Naive thymus-derived CD4-positive, alpha-beta T cell (primary cell): ENCODE measurements at regions of chr15 and their contacts with region 1.

Region 1: DNA sequence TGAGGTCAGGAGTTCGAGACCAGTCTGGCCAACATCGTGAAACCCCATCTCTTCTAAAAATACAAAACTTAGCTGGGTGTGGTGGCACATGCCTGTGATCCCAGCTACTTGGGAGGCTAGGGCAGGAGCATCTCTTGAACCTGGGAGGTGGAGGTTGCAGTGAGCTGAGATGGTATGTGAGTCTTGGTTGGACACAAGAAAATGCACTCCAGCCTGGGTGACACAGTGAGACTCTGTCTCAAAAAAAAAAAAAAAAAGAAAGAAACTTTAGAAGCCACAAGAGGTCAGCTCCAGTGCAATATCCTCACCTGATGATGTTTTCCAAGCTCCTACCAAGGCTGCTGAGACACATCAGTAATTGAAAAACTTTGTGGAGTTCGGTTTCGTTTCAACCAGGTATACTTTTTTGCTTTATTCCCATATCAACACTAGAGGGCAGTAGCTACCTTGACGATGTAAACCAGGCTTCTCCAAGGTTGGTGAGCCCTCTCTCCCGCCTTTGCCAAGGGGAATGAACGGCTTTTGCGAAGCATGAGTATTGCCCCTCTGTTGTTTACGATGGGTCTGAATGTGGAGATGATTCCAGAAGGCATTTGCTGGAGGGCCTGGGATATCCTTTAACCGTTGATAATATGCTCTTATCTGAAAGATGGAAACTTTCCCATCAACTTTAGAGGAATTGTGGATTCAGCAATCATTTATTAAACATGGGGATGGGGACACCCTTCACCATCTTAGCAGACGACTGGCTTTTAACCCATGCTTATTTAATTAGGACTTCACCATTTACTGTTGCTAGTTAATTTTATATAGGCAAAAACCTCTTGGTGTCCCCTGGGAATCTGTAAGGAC is 202.8 kb downstream of the SV2B start:
- DNase-seq: peak in 6 of 9 donors; percentile 32 to 64 (median 55)
- ATAC-seq: peak; percentile 79
- H3K4me3 ChIP-seq: no peak overlapping the region
- H3K4me3 Mint-ChIP-seq: peak overlapping the region in 7 of 10 donors; percentile 20 to 61 (median 57)
- H3K27ac ChIP-seq: no peak overlapping the region
- H3K27ac Mint-ChIP-seq: peak overlapping the region in 3 of 9 donors; percentile 15 to 63 (median 34)
- H3K4me1 ChIP-seq: peaks cover 16 to 27% of the 10 kb centered on the region in 2 donors
- H3K4me1 Mint-ChIP-seq: peaks cover 19 to 53% (median 45%) of the 10 kb centered on the region in 7 donors
- H3K27me3 ChIP-seq: no peaks in the 10 kb centered on the region
- H3K27me3 Mint-ChIP-seq: peaks cover 0 to 70% (median 0%) of the 10 kb centered on the region in 5 donors

Region 2: GRCh38 chr15:91320101-91320500 is 17.3 kb after region 1 on chr15:
- CTCF ChIA-PET with region 1: no interaction called
- POLR2A ChIA-PET with region 1: interaction called, 3 read pairs
- intact Hi-C with region 1: loop called in 1 of 2 experiments (anchors 2 kb)
- DNase-seq: peak in 3 of 9 donors; percentile 21 to 44 (median 36)
- ATAC-seq: peak; percentile 75
- H3K4me3 ChIP-seq: peak overlapping the region; percentile 8
- H3K4me3 Mint-ChIP-seq: peak overlapping the region; percentile 46 to 78 (median 64)
- H3K27ac ChIP-seq: peak overlapping the region; percentile 66
- H3K27ac Mint-ChIP-seq: peak overlapping the region; percentile 69 to 98 (median 90)
- H3K4me1 ChIP-seq: peaks cover 18 to 35% of the 10 kb centered on the region in 2 donors
- H3K4me1 Mint-ChIP-seq: peaks cover 12 to 64% (median 38%) of the 10 kb centered on the region in 7 donors
- H3K27me3 ChIP-seq: no peaks in the 10 kb centered on the region
- H3K27me3 Mint-ChIP-seq: peaks cover 0 to 53% (median 0%) of the 10 kb centered on the region in 5 donors

Region 3: DNA sequence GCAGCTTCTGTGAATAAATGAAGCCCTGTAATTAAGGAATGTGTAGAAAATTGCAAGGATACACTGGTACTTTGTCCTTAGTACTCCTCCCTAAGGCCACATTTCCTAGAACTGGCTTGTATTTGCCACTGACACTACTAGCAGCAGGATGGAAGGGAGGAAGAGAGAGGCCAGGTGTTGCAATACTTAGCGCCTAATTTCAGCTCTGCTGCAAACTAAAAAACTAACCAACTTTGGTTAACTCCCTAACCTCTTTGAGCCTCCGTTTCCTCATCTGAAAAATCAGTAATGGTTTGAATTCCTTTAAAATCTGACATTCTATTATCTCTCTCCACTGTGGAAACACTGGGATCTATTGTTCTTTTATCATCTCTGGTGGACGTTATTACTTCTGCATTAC is 54.2 kb after region 1 on chr15:
- CTCF ChIA-PET with region 1: no interaction called
- POLR2A ChIA-PET with region 1: no interaction called
- intact Hi-C with region 1: no loop called
- DNase-seq: no peak
- ATAC-seq: no peak
- H3K4me3 ChIP-seq: no peak overlapping the region
- H3K4me3 Mint-ChIP-seq: no peak overlapping the region
- H3K27ac ChIP-seq: no peak overlapping the region
- H3K27ac Mint-ChIP-seq: no peak overlapping the region
- H3K4me1 ChIP-seq: no peaks in the 10 kb centered on the region
- H3K4me1 Mint-ChIP-seq: peaks cover 0 to 14% (median 0%) of the 10 kb centered on the region in 7 donors
- H3K27me3 ChIP-seq: no peaks in the 10 kb centered on the region
- H3K27me3 Mint-ChIP-seq: peaks cover 0 to 30% (median 4%) of the 10 kb centered on the region in 5 donors

Region 4: GRCh38 chr15:91589356-91589755 is 286.5 kb after region 1 on chr15:
- CTCF ChIA-PET with region 1: interaction called, 3 read pairs
- POLR2A ChIA-PET with region 1: no interaction called
- intact Hi-C with region 1: loop called in 1 of 2 experiments (anchors 1 kb)
- DNase-seq: peak in 3 of 9 donors; percentile 1 to 27 (median 10)
- ATAC-seq: no peak
- H3K4me3 ChIP-seq: no peak overlapping the region
- H3K4me3 Mint-ChIP-seq: no peak overlapping the region
- H3K27ac ChIP-seq: no peak overlapping the region
- H3K27ac Mint-ChIP-seq: no peak overlapping the region
- H3K4me1 ChIP-seq: no peaks in the 10 kb centered on the region
- H3K4me1 Mint-ChIP-seq: peaks cover 0 to 3% (median 0%) of the 10 kb centered on the region in 7 donors
- H3K27me3 ChIP-seq: peaks cover 0 to 10% of the 10 kb centered on the region in 2 donors
- H3K27me3 Mint-ChIP-seq: peaks cover 0 to 24% (median 9%) of the 10 kb centered on the region in 5 donors

Region 5: DNA sequence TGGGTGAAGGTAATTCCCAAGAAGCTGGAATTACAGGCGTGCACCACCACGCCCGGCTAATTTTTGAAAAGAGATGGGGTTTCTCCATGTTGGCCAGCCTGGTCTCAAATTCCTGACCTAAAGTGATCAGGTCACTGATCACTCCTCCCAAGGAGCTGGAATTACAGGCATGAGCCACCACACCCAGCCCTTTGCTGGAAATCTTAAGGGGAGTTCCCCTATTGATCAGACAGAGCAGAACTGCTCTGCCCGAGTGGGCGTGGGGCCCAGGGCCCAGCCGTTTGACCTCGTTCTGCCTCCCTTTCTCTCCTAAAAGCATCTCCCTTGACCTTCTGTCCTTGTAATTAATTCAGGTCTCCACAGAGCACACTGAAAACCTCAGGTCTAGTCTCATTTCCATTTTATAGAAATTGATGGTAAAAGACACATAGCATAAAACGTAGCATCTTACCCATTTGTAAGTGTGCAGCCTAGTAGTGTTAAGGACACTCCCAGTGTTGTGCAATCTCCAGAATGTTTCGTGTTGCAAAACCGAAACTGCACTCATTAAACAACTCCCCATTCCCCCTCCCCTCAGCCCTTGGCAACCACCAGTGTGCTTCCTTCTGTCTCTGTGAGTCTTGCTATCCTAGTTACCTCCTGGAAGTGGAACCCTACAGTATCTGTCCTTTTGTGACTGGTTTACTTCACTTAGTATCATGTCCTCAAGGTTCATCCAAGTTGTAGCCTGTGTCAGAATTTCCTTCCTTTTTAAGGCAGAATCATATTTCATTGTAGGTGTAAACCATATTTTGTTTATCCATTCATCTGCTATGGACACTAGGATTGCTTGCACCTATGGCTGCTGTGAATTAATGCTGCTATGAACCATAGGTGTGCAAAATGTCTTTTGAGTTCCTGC is 640.1 kb after region 1 on chr15:
- CTCF ChIA-PET with region 1: interaction called, 10 read pairs
- POLR2A ChIA-PET with region 1: interaction called, 3 read pairs
- intact Hi-C with region 1: loop called (anchors 1 to 10 kb)
- DNase-seq: peak in 5 of 9 donors; percentile 6 to 32 (median 24)
- ATAC-seq: peak; percentile 82
- H3K4me3 ChIP-seq: no peak overlapping the region
- H3K4me3 Mint-ChIP-seq: peak overlapping the region in 7 of 10 donors; percentile 8 to 81 (median 42)
- H3K27ac ChIP-seq: no peak overlapping the region
- H3K27ac Mint-ChIP-seq: peak overlapping the region in 5 of 9 donors; percentile 23 to 87 (median 67)
- H3K4me1 ChIP-seq: peaks cover 0 to 11% of the 10 kb centered on the region in 2 donors
- H3K4me1 Mint-ChIP-seq: peaks cover 10 to 81% (median 57%) of the 10 kb centered on the region in 7 donors
- H3K27me3 ChIP-seq: no peaks in the 10 kb centered on the region
- H3K27me3 Mint-ChIP-seq: peaks cover 0 to 6% (median 0%) of the 10 kb centered on the region in 5 donors

Region 6: GRCh38 chr15:92226014-92226612 is 923.3 kb after region 1 on chr15:
- CTCF ChIA-PET with region 1: no interaction called
- POLR2A ChIA-PET with region 1: no interaction called
- intact Hi-C with region 1: loop called in 1 of 2 experiments (anchors 2 kb)
- DNase-seq: no peak
- ATAC-seq: no peak
- H3K4me3 ChIP-seq: no peak overlapping the region
- H3K4me3 Mint-ChIP-seq: no peak overlapping the region
- H3K27ac ChIP-seq: no peak overlapping the region
- H3K27ac Mint-ChIP-seq: no peak overlapping the region
- H3K4me1 ChIP-seq: no peaks in the 10 kb centered on the region
- H3K4me1 Mint-ChIP-seq: no peaks in the 10 kb centered on the region
- H3K27me3 ChIP-seq: no peaks in the 10 kb centered on the region
- H3K27me3 Mint-ChIP-seq: peaks cover 9 to 41% (median 29%) of the 10 kb centered on the region in 5 donors